Breast epithelium (tissue), 4 donors: ENCODE measurements at regions of chr12 and their contacts with region 1.

Region 1: GRCh38 chr12:26188127-26188526 is 7.2 kb upstream of the SSPN start:
- DNase-seq: no peak
- H3K4me3 ChIP-seq: no peak overlapping the region
- H3K27ac ChIP-seq: no peak overlapping the region
- H3K4me1 ChIP-seq: no peaks in the 10 kb centered on the region
- H3K27me3 ChIP-seq: no peaks in the 10 kb centered on the region
- CTCF ChIP-seq: no peak
- POLR2A ChIP-seq: no peak

Region 2: GRCh38 chr12:26226629-26227360 is 38.7 kb after region 1 on chr12:
- intact Hi-C with region 1: no loop called
- DNase-seq: peak in 1 of 2 donors; percentile 41
- H3K4me3 ChIP-seq: peak overlapping the region; percentile 40 to 69 (median 50)
- H3K27ac ChIP-seq: peak overlapping the region; percentile 71 to 81
- H3K4me1 ChIP-seq: peaks cover 0 to under 1% of the 10 kb centered on the region in 2 donors
- H3K27me3 ChIP-seq: no peaks in the 10 kb centered on the region
- CTCF ChIP-seq: no peak
- POLR2A ChIP-seq: no peak

Region 3: DNA sequence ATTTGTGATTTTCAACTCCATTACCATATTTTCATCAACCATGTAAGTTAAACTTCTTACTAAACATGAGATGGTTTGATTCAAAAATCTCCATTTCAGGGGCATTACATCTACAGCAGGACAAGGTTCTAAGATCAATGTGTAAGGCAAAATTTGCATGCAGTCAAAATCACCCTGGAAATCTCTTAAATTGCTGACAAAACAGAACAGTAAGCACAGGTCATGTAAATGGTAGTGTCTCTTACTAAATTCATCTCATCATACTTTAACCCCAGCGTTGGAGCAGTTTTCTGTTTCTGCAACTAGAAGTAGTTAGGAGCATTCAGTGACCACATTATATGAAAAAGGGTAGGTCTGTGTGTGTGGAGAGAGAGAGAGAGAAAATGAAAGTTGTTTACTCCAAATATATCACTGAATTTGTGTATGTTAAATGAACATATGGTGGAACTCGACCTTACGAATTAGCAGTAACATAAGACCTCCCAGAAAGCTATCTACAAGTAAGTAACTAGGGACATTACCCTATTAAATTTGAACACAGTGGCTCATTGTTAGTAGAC is 234.8 kb after region 1 on chr12:
- intact Hi-C with region 1: loop called (anchors 5 kb)
- DNase-seq: no peak
- H3K4me3 ChIP-seq: no peak overlapping the region
- H3K27ac ChIP-seq: no peak overlapping the region
- H3K4me1 ChIP-seq: no peaks in the 10 kb centered on the region
- H3K27me3 ChIP-seq: no peaks in the 10 kb centered on the region
- CTCF ChIP-seq: no peak
- POLR2A ChIP-seq: no peak